B cell (primary cell): ENCODE measurements at regions of chr11 and their contacts with region 1.

Region 1: DNA sequence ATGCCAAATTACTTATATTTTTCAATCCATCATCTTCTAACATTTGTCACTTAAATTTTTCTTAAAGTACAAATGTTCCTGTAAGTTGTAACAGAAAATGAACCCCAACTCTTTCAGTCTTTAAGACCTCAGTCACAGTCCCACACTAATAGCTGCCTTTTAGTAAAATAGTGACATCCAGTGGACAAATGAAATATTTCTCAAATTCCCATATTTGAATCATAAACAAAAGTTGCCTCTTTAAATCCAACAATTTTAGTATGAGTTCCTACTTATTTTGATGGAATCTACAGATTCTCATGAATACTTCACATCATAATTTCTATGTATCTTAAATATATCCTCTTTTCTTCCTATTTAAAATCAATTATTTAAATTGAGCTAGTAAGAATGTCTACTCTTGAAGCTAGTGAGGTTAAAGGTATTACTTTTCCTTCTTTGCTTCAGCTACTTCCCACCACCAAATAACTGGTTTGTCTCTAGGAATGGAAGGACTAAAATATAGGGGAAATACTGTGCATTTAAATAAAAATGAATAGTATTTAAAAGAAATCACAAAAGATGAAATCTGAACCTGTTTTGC is 9.2 kb downstream of the LIN7C start:
- DNase-seq: peak; percentile 24
- ATAC-seq: no peak
- H3K4me3 ChIP-seq: no peak overlapping the region
- H3K4me3 Mint-ChIP-seq: no peak overlapping the region
- H3K27ac ChIP-seq: no peak overlapping the region
- H3K27ac Mint-ChIP-seq: no peak overlapping the region
- H3K4me1 ChIP-seq: no peaks in the 10 kb centered on the region
- H3K4me1 Mint-ChIP-seq: peaks cover 9% of the 10 kb centered on the region
- H3K27me3 ChIP-seq: no peaks in the 10 kb centered on the region
- H3K27me3 Mint-ChIP-seq: no peaks in the 10 kb centered on the region
- CTCF ChIP-seq: peak; percentile 72

Region 2: GRCh38 chr11:27183672-27184457 is 313.5 kb before region 1 on chr11:
- CTCF ChIA-PET with region 1: interaction called, 30 read pairs
- POLR2A ChIA-PET with region 1: no interaction called
- intact Hi-C with region 1: no loop called
- DNase-seq: peak; percentile 46
- ATAC-seq: no peak
- H3K4me3 ChIP-seq: no peak overlapping the region
- H3K4me3 Mint-ChIP-seq: no peak overlapping the region
- H3K27ac ChIP-seq: no peak overlapping the region
- H3K27ac Mint-ChIP-seq: no peak overlapping the region
- H3K4me1 ChIP-seq: no peaks in the 10 kb centered on the region
- H3K4me1 Mint-ChIP-seq: no peaks in the 10 kb centered on the region
- H3K27me3 ChIP-seq: peaks cover 0 to 2% (median 0%) of the 10 kb centered on the region in 4 experiments
- H3K27me3 Mint-ChIP-seq: peaks cover 10% of the 10 kb centered on the region
- CTCF ChIP-seq: peak; percentile 64

Region 3: DNA sequence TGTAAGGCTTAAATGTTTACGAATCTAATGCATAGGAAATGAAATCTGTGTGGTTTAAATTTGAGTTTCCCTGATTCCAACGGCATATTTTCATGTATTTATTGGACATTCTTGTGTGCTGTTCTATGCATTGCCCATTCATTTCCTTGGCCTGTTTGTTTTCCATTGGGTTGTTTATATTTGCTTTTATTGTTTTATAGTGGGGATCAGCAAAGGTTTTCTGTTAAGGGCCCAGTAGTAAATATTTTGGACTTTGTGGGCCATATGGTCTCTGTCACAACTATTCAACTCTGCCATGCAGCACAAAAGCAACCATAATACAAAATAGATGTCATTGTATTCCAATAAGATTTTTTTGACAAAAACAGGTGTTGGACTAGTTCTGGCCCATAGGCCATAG is 19.5 kb before region 1 on chr11:
- CTCF ChIA-PET with region 1: interaction called, 118 read pairs
- POLR2A ChIA-PET with region 1: no interaction called
- intact Hi-C with region 1: no loop called
- DNase-seq: no peak
- ATAC-seq: no peak
- H3K4me3 ChIP-seq: no peak overlapping the region
- H3K4me3 Mint-ChIP-seq: no peak overlapping the region
- H3K27ac ChIP-seq: no peak overlapping the region
- H3K27ac Mint-ChIP-seq: no peak overlapping the region
- H3K4me1 ChIP-seq: no peaks in the 10 kb centered on the region
- H3K4me1 Mint-ChIP-seq: peaks cover 4% of the 10 kb centered on the region
- H3K27me3 ChIP-seq: no peaks in the 10 kb centered on the region
- H3K27me3 Mint-ChIP-seq: no peaks in the 10 kb centered on the region
- CTCF ChIP-seq: no peak

Region 4: GRCh38 chr11:28505210-28505609 is 1007.8 kb after region 1 on chr11:
- CTCF ChIA-PET with region 1: no interaction called
- POLR2A ChIA-PET with region 1: no interaction called
- intact Hi-C with region 1: no loop called
- DNase-seq: no peak
- ATAC-seq: no peak
- H3K4me3 ChIP-seq: no peak overlapping the region
- H3K4me3 Mint-ChIP-seq: no peak overlapping the region
- H3K27ac ChIP-seq: no peak overlapping the region
- H3K27ac Mint-ChIP-seq: no peak overlapping the region
- H3K4me1 ChIP-seq: no peaks in the 10 kb centered on the region
- H3K4me1 Mint-ChIP-seq: no peaks in the 10 kb centered on the region
- H3K27me3 ChIP-seq: no peaks in the 10 kb centered on the region
- H3K27me3 Mint-ChIP-seq: no peaks in the 10 kb centered on the region
- CTCF ChIP-seq: no peak